ENCODE measurements at regions of chr2 and their contacts with region 1.

Region 1: GRCh38 chr2:96554293-96555145 is 18.0 kb downstream of the ARID5A start:
- DNase-seq: peak; percentile 58 to 89
- H3K4me3 ChIP-seq: peak overlapping the region; percentile 0 to 10
- H3K27ac ChIP-seq: peak overlapping the region in 1 of 2 donors; percentile 62
- H3K4me1 ChIP-seq: peaks cover 0 to 18% (median 12%) of the 10 kb centered on the region in 4 donors
- H3K27me3 ChIP-seq: no peaks in the 10 kb centered on the region
- CTCF ChIP-seq: peak; percentile 97 to 98

Region 2: DNA sequence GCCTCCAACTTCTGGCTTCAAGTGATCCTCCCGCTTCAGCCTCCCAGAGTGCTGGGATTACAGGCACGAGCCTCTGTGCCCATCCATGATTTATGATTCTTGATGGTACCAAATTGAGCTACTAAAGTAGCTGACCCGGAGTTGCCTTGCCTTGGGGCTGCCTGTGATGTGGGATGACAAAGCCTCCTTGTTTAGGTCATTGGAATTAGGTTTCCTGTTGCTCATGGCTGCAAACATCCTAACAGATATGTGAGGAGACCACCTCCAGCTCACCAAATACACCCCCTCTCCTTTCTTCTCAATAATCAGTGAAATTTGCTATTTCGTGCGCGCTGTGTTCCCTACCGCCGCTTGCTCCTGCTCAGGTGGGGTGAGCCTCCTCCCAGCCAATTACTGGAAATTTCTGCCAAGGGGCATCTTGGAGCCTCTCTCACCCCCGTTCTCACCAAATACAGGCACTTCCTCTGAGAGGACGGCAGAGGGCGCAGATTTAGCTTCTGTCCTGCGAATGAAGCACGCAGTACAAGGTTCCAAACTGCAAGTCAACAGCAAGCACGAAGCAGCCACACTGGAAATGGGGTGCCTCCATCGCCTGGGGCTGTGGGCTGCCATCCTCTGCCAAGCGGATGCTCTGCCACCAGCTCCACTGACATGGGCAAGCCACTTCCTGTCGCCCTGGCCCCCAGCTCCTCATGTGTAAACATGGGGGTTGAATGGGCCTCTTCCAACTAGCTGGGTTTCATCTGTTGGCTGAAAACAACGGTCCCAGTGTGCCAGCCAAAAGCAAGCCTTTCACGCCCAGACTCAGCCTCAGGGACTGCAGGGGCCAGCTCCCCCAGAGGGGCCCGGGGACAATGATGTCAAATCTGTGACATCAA is 147.2 kb before region 1 on chr2:
- intact Hi-C with region 1: loop called (anchors 10 kb)
- DNase-seq: peak; percentile 38 to 78
- H3K4me3 ChIP-seq: no peak overlapping the region
- H3K27ac ChIP-seq: no peak overlapping the region
- H3K4me1 ChIP-seq: peaks cover 0 to 41% (median 26%) of the 10 kb centered on the region in 4 donors
- H3K27me3 ChIP-seq: no peaks in the 10 kb centered on the region
- CTCF ChIP-seq: peak; percentile 73 to 76

Region 3: GRCh38 chr2:96514521-96514920 is 40.0 kb before region 1 on chr2:
- intact Hi-C with region 1: no loop called
- DNase-seq: peak in 1 of 2 donors; percentile 38
- H3K4me3 ChIP-seq: no peak overlapping the region
- H3K27ac ChIP-seq: no peak overlapping the region
- H3K4me1 ChIP-seq: peaks cover 0 to 1% (median 0%) of the 10 kb centered on the region in 4 donors
- H3K27me3 ChIP-seq: no peaks in the 10 kb centered on the region
- CTCF ChIP-seq: no peak